ENCODE measurements at regions of chr4 and their contacts with region 1.

Region 1: DNA sequence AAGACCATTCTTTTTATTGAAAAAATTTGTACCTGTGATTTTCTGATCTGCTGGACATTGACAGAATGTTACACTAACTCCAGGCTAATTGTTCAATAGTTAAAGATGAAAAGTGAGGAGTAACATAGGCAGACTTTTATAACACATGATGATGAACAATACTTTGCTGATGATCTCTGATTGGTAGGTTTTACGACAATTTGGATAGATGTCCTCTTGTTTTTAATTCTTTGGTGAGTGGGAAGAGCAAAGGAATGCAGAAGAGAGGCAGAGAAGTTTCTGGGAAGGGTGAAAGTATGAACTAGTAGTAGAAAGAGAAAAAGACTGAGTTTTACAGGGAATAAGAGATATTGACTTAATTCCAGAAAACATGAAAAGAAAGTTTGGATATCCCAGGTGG is 267.3 kb upstream of the HAND2 start:
- DNase-seq: no peak
- H3K4me3 ChIP-seq: no peak overlapping the region
- H3K27ac ChIP-seq: no peak overlapping the region
- H3K4me1 ChIP-seq: no peaks in the 10 kb centered on the region
- H3K27me3 ChIP-seq: no peaks in the 10 kb centered on the region
- CTCF ChIP-seq: no peak
- POLR2A ChIP-seq: no peak

Region 2: GRCh38 chr4:173722075-173722474 is 75.2 kb before region 1 on chr4:
- intact Hi-C with region 1: loop called (anchors 2 kb)
- DNase-seq: no peak
- H3K4me3 ChIP-seq: no peak overlapping the region
- H3K27ac ChIP-seq: no peak overlapping the region
- H3K4me1 ChIP-seq: no peaks in the 10 kb centered on the region
- H3K27me3 ChIP-seq: no peaks in the 10 kb centered on the region
- CTCF ChIP-seq: no peak
- POLR2A ChIP-seq: no peak

Region 3: GRCh38 chr4:173943547-173943946 is 146.3 kb after region 1 on chr4:
- intact Hi-C with region 1: no loop called
- DNase-seq: no peak
- H3K4me3 ChIP-seq: no peak overlapping the region
- H3K27ac ChIP-seq: no peak overlapping the region
- H3K4me1 ChIP-seq: no peaks in the 10 kb centered on the region
- H3K27me3 ChIP-seq: no peaks in the 10 kb centered on the region
- CTCF ChIP-seq: no peak
- POLR2A ChIP-seq: no peak

Measured in breast epithelium (tissue), 4 donors.